Activated CD4-positive, alpha-beta T cell treated with anti-CD3 and anti-CD28 coated beads, Interleukin-2, amount 10 ng/mL, durations not matched to agents 24 days and 14 days (primary cell): ENCODE measurements at regions of chr22 and their contacts with region 1.

Region 1: GRCh38 chr22:42933481-42934091 is 76.5 kb upstream of the ARFGAP3 start:
- DNase-seq: peak; percentile 71
- H3K4me3 Mint-ChIP-seq: peak overlapping the region; percentile 61
- H3K27ac Mint-ChIP-seq: peak overlapping the region; percentile 92
- H3K4me1 Mint-ChIP-seq: peaks cover 48% of the 10 kb centered on the region
- H3K27me3 Mint-ChIP-seq: no peaks in the 10 kb centered on the region

Region 2: DNA sequence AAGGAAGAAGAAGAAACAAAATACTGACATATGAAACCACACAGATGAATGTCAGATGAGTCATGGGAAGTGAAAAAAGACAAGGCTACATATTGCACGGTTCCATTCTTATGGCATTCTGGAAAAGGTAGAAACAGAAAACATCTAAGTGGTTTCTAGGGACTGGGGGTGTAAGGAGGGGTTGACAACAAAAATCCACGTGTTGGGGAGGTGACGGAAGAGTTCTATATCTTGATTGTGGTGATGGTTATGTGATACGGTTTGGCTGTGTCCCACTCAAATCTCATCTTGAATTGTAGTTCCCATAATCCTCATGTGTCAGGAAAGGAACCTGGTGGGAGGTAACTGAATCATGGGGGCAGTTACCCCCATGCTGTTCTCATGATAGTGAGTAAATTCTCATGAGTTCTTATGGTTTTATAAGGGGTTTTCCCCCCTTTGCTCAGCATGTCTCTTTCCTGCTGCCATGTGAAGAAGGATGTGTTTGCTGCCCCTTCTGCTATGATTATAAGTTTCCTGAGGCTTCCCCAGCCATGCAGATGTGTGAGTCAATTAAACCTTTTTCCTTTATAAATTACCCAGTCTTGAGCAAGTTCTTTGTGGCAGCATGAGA is 70.1 kb before region 1 on chr22:
- intact Hi-C with region 1: loop called (anchors 5 kb)
- DNase-seq: peak; percentile 62
- H3K4me3 Mint-ChIP-seq: peak overlapping the region; percentile 13
- H3K27ac Mint-ChIP-seq: peak overlapping the region; percentile 91
- H3K4me1 Mint-ChIP-seq: peaks cover 12% of the 10 kb centered on the region
- H3K27me3 Mint-ChIP-seq: peaks cover 5% of the 10 kb centered on the region

Region 3: GRCh38 chr22:42895087-42895486 is 38.5 kb before region 1 on chr22:
- intact Hi-C with region 1: loop called (anchors 5 kb)
- DNase-seq: peak; percentile 73
- H3K4me3 Mint-ChIP-seq: peak overlapping the region; percentile 16
- H3K27ac Mint-ChIP-seq: peak overlapping the region; percentile 78
- H3K4me1 Mint-ChIP-seq: peaks cover 34% of the 10 kb centered on the region
- H3K27me3 Mint-ChIP-seq: no peaks in the 10 kb centered on the region

Region 4: DNA sequence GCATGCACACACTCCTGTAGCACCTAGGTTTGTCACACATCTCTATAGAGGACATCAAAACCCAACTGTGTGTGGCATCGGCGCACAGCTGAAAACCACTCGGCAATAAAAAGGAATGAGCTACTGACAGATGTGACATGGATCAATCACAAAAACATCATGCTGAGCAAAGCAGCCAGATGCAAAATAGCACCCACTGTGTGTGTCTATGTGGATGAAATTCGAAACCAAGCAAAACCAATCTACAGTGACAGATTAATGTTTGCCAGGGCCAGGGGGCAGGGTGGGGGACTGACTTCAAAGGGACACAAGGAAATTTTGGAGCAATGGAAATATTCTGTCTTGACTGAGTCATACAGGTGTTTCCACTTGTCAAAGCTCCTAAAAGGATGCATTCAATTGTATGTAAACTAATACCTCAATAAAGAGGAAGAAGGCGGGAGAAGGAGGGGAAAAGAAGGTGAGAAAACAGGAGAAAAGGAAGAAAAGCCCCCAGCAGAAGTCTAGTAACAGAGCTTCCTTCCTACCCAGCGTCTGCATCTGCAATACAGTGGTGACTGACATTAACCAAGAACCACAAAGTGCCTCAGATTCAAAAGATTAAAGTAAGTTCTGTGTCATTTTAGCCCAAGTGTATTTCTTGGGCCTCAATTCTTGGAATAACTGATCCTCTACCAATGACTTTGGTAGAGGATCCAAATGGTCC is 31.6 kb after region 1 on chr22:
- intact Hi-C with region 1: loop called (anchors 2 kb)
- DNase-seq: peak; percentile 67
- H3K4me3 Mint-ChIP-seq: peak overlapping the region; percentile 23
- H3K27ac Mint-ChIP-seq: peak overlapping the region; percentile 82
- H3K4me1 Mint-ChIP-seq: peaks cover 41% of the 10 kb centered on the region
- H3K27me3 Mint-ChIP-seq: no peaks in the 10 kb centered on the region

Region 5: GRCh38 chr22:43014869-43015676 is 81.5 kb after region 1 on chr22 and contains the start of gene PACSIN2:
- intact Hi-C with region 1: loop called (anchors 5 kb)
- DNase-seq: peak; percentile 100
- H3K4me3 Mint-ChIP-seq: peak within 1 kb of the TSS; percentile 95
- H3K27ac Mint-ChIP-seq: peak within 1 kb of the TSS; percentile 88
- H3K4me1 Mint-ChIP-seq: peaks cover 26% of the 10 kb centered on the region
- H3K27me3 Mint-ChIP-seq: peaks cover 8% of the 10 kb centered on the region
- total RNA-seq, gene PACSIN2: 32.5 and 33.0 TPM in 2 replicates